ENCODE measurements at regions of chr15 and their contacts with region 1.

Region 1: DNA sequence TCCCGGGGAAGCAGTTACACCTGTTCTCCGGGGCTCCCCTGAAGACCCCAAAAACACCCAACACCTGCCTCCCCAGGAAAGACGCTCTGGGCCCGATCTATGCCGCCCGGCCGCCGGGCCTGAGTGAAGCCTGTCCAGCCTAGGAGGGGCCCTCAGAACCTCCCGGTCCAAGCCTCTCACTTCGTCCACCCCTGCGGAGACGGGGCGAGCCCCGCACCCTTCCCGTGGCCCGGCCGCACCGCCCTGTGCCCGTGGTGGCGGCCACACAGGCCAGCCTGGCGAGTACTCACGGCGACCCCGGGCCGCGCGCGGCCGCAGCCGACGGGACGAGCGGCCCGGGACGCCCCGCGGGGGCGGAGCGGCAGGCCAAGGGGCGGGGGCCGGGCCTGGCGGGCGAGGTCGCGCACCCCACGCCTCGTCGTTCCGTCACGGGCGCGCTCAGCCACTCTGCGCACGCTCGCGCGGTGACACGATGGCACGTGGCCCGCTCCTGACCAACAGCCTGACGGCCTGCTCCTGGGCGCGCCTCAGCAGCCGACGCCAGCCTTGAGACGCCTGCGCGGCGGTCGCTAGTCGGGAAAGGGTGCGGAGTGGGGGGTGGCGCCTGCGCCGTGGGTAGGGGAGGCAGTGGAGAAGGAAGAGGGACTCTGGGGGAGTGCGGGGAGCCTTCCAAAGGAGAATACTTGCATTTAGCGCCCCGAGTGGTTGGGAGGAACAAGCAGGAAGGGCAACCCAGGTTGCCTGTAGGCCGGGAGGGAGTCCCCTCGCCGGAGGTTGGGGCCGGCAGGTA is at the start of gene PARP6:
- DNase-seq: peak; percentile 99
- ATAC-seq: peak; percentile 99
- total RNA-seq, gene PARP6: 30.4 to 36.0 TPM

Region 2: GRCh38 chr15:72199711-72200212 is 72.6 kb before region 1 on chr15:
- intact Hi-C with region 1: loop called in 1 of 2 experiments (anchors 5 kb)
- DNase-seq: peak; percentile 75
- ATAC-seq: peak; percentile 45 to 55

Region 3: GRCh38 chr15:72231066-72231846 is 41.2 kb before region 1 on chr15 and contains the start of gene PKM:
- intact Hi-C with region 1: loop called in 1 of 2 experiments (anchors 5 kb)
- DNase-seq: peak; percentile 98
- ATAC-seq: peak; percentile 90 to 91
- total RNA-seq, gene PKM: 881 to 1,100 TPM

Measured in left cardiac atrium (tissue), 4 donors.